K562 (cell line): ENCODE measurements at regions of chr22 and their contacts with region 1.

Region 1: GRCh38 chr22:39559454-39560105 is 11.0 kb upstream of the CACNA1I start:
- DNase-seq: peak; percentile 65 to 79 (median 72)
- ATAC-seq: peak; percentile 89
- H3K4me3 ChIP-seq: no peak overlapping the region
- H3K27ac ChIP-seq: no peak overlapping the region
- H3K4me1 ChIP-seq: peaks cover 0 to 31% of the 10 kb centered on the region in 2 experiments; a peak in 3 of 5 replicates
- H3K27me3 ChIP-seq: no peaks in the 10 kb centered on the region
- CTCF ChIP-seq: peak; percentile 64 to 69 (median 65)
- EP300 ChIP-seq: no peak
- POLR2A ChIP-seq: no peak
- RAD21 ChIP-seq: peak; percentile 32 to 58

Region 2: DNA sequence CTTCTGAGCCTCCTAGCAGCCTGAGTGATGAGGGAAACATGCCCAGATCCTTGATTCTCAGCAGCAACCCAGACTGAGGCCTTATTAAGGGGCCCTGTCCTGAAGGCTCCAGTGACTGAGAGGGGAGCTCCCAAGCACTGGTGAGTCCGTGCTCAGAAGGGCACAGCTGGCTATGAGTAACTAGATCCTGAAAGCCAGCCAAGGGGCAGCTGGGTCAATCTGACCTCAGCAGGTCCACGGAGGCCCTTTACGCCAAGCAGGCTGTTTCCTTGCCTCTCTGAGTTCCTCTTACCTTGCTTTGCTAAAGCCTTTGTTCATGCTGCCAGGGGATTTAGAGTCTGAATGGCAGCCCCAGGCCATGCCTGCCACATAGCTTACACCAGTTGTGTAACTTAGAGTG is 76.8 kb before region 1 on chr22:
- CTCF ChIA-PET with region 1: no interaction called
- POLR2A ChIA-PET with region 1: no interaction called
- in situ Hi-C with region 1: no loop called
- intact Hi-C with region 1: no loop called
- DNase-seq: no peak
- ATAC-seq: no peak
- H3K4me3 ChIP-seq: no peak overlapping the region
- H3K27ac ChIP-seq: no peak overlapping the region
- H3K4me1 ChIP-seq: peaks cover 7 to 48% of the 10 kb centered on the region in 2 experiments; a peak in 4 of 5 replicates
- H3K27me3 ChIP-seq: no peaks in the 10 kb centered on the region
- CTCF ChIP-seq: no peak
- EP300 ChIP-seq: no peak
- POLR2A ChIP-seq: no peak
- RAD21 ChIP-seq: no peak

Region 3: DNA sequence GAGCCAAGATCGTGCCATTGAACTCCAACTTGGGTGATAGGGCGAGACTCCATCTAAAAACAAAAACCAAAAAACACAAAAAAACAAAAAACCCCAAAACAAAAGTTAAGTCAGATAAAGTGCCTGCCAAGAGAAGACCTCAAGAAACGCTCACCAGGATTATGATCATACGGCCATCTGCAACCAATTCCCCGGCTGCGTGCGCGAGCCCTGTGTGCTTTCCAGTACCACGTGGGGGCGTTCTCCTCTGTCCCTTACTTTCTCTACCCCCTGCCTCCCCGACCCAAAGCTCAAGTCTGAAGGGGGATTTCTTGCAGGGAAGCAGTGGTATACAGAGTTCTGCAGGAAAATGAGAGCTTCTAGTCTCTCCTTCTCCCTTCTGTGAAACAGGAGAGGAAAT is 16.5 kb before region 1 on chr22:
- CTCF ChIA-PET with region 1: no interaction called
- POLR2A ChIA-PET with region 1: no interaction called
- in situ Hi-C with region 1: no loop called
- intact Hi-C with region 1: no loop called
- DNase-seq: peak; percentile 36 to 67 (median 54)
- ATAC-seq: peak; percentile 91
- H3K4me3 ChIP-seq: no peak overlapping the region
- H3K27ac ChIP-seq: no peak overlapping the region
- H3K4me1 ChIP-seq: peaks cover 0 to 6% of the 10 kb centered on the region in 2 experiments; a peak in 1 of 5 replicates
- H3K27me3 ChIP-seq: peaks cover 0 to 22% of the 10 kb centered on the region in 2 experiments; a peak in 1 of 5 replicates
- CTCF ChIP-seq: peak; percentile 61 to 71 (median 68)
- EP300 ChIP-seq: no peak
- POLR2A ChIP-seq: no peak
- RAD21 ChIP-seq: peak; percentile 43 to 62

Region 4: DNA sequence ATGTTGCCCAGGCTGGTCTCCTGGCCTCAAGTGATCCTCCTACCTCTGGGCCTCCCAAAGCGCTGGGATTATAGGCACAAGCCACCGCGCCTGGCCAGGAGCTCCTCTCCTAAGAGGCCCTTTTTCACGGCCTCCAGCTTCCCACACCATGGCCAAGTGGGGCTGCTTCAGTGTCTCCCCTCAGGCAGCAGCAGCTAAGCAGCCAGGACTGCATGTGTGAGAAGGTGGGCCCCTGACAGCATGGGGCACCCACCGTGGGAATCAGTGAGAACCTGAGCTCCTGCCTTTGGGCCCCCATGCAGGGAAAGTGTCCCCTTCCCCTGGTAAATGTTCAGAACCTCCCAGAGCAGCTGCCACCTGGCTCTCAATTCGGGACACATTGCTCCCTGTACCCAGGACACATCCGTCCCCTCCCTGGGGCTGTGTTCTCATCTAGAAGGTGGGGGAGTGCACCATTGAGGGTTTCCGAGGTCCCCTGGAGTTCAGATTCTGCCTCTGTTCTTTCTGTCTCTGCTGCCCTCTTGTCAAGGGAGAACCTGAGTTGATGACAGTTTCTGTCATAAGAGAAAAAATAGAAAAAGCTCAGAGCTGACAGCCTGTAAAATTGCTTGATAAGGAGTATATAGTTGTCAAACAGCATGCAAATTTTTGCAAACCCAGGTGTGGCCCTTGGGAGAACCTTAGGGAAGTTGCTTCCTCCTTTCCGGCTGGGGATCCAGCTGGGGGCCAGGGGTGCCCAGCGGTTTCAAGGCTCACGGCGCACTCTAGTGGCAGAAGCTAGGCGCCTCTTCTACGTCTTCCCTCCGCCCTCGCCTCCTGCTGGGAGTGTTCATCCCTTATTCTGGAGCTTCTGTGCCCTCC is 464.9 kb after region 1 on chr22:
- CTCF ChIA-PET with region 1: interaction called, 6 read pairs
- POLR2A ChIA-PET with region 1: no interaction called
- in situ Hi-C with region 1: no loop called
- intact Hi-C with region 1: loop called (anchors 5 kb)
- DNase-seq: peak; percentile 81 to 84 (median 82)
- ATAC-seq: peak; percentile 95
- H3K4me3 ChIP-seq: no peak overlapping the region
- H3K27ac ChIP-seq: no peak overlapping the region
- H3K4me1 ChIP-seq: peaks cover 4 to 28% of the 10 kb centered on the region in 2 experiments; a peak in 4 of 5 replicates
- H3K27me3 ChIP-seq: no peaks in the 10 kb centered on the region
- CTCF ChIP-seq: peak; percentile 83 to 95 (median 91)
- EP300 ChIP-seq: no peak
- POLR2A ChIP-seq: no peak
- RAD21 ChIP-seq: peak; percentile 90 to 96